Activated B cell treated with CpG ODN at 0.5 μM for 24 hours (primary cell): ENCODE measurements at regions of chr2 and their contacts with region 1.

Region 1: DNA sequence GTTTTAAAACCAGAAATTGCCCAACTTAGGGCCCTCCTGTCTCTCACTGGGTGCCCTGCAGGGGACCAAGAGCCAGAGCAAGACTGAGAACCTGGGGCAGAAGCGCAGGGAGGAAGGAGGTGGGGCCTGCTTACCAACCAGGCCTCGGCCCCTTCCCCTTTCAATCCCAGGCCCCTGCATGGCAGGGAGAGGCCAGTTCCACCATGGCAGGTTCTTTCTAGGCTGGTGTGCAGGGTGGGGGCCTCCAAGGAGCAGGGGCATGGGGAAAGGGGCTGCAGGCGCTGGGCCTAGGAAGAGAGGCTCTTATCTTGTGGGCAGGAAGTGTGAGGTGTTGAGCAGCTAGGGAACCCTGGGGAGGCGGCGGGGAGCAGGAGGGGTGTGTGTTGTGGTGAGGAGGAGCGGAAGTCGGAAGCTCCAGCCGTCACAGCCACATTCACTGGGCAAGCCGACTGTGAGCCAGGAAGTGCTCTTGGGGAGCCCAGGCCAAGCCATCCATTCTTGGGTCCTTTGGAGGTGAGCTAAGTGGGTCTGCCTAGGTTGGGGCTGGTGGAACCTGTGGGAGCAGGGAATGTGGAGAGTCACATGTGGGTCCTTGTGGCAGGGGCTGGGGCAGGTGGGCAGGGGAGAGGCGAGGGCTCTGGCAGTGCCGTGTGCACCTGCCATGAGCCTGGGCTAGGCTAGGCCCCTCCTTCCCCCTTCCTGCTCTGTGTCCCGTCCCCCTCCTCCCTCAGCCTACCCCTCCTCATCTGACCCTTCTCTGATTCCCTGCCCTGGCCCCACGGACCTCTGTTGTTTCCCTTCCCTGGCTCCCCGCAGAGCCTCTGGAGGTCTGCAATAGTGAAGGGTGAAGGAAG is at the start of gene PSD4:
- DNase-seq: peak; percentile 69
- ATAC-seq: peak; percentile 75
- H3K4me3 Mint-ChIP-seq: peak within 1 kb of the TSS; percentile 87
- H3K27ac Mint-ChIP-seq: peak within 1 kb of the TSS; percentile 91
- H3K4me1 Mint-ChIP-seq: peaks cover 85% of the 10 kb centered on the region
- H3K27me3 Mint-ChIP-seq: peaks cover 2% of the 10 kb centered on the region
- CTCF ChIP-seq: no peak
- total RNA-seq, gene PSD4: 161 and 182 TPM in 2 replicates

Region 2: DNA sequence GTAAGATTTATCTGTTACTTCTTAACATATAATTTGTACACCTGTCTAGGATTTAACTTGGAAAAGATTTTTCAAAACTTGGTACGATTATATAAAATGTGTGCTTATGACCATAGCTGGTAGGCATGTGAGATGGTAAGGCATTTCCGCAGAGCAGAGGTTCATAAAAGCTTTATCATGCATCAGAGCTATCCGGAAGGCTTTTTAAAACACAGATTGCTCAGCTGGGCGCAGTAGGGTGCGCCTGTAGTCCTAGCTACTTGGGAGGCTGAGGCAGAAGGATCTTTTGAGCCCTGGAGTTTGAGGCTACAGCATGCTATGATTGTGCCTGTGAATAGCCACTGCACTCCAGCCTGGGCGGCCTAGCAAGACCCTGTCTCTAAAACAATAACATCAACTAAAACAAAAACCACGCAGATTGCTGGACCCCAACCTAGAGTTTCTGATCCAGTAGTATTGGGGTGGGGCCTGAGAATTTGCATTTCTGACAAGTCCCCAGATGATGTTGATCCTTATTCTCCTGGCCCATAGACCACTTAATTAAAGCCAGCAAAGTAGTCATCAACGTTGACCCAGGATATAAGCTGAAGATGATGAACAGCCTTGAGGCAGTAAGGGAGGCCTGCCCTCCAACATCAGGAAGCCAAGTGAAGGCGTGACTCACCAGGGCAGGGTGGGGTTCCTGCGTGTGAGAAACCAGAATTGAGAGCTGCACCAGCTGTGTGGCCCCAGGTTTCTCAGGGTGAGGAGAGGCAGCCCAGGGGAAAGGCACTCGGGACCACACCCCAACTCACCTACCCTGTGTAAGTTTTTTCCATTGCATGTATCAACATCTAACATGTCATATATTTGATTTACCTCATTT is 549.6 kb before region 1 on chr2:
- CTCF ChIA-PET with region 1: no interaction called
- POLR2A ChIA-PET with region 1: no interaction called
- intact Hi-C with region 1: no loop called
- DNase-seq: no peak
- ATAC-seq: peak; percentile 75
- H3K4me3 Mint-ChIP-seq: no peak overlapping the region
- H3K27ac Mint-ChIP-seq: no peak overlapping the region
- H3K4me1 Mint-ChIP-seq: peaks cover 16% of the 10 kb centered on the region
- H3K27me3 Mint-ChIP-seq: no peaks in the 10 kb centered on the region
- CTCF ChIP-seq: no peak

Region 3: DNA sequence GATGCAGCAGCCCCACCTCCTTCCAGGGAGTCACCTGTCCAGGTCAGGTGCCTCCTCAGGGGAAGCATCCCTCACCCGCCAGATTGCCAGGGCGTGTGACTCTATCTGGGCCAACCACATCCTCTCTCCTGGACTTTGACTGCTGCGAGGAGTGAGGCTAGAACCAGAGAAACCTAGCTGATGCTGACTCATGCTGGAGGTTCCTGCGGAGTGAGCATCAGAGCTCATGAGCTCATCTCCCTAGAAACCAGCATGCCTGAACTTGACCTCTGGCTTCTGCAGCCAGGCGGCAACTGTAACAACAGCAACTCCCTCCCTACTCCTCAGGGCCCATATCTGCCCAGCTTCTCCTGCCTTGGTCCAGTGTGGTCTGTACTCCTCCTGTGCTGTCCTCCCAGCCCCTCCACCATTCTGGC is 481.3 kb before region 1 on chr2:
- CTCF ChIA-PET with region 1: no interaction called
- POLR2A ChIA-PET with region 1: no interaction called
- intact Hi-C with region 1: no loop called
- DNase-seq: no peak
- ATAC-seq: peak; percentile 43
- H3K4me3 Mint-ChIP-seq: no peak overlapping the region
- H3K27ac Mint-ChIP-seq: peak overlapping the region; percentile 37
- H3K4me1 Mint-ChIP-seq: peaks cover 17% of the 10 kb centered on the region
- H3K27me3 Mint-ChIP-seq: no peaks in the 10 kb centered on the region
- CTCF ChIP-seq: no peak

Region 4: DNA sequence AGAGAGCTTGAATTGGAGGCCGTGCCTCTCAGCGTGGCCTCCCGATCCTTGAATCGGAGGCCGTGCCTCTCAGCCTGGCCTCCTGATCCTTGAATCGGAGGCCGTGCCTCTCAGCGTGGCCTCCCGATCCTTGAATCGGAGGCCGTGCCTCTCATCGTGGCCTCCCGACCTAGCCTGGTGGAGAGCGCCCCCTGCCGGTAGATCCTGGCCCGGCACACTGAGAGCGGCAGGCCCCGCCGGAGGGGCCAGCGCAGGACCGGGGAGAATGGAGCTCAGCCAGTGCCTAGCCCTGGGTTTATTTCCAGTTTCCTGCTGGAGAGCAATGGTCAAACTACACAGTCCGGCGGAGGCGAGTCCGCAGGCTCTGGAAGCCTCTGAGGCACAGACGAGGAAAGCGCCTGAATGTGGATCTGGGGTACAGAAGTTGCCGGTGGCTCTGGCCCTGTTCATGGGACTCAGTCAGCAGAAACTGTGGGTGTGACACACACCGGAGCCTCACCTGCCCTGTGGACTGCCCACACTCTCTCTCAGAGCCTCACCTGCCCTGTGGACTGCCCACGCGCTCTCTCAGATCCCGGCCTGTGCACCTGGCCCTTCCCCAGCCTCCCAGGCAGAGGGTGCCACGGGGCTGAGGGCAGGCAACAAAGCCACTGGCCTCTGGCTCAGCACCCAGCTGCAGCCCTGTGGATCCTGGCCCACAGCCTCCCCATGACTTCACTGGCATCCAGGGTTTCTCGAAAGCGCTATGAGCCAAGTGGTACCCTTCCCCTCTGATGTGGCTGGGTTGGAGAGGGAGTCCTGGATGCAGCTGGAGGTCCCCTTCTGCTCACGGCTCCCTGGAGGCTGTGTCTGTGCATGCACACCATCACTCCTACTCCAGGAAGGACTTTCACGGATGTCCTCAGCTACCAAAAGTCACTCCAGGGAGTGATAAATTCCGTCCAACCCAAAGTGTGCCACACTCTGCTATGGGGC is 122.6 kb before region 1 on chr2:
- CTCF ChIA-PET with region 1: no interaction called
- POLR2A ChIA-PET with region 1: no interaction called
- intact Hi-C with region 1: no loop called
- DNase-seq: no peak
- ATAC-seq: no peak
- H3K4me3 Mint-ChIP-seq: no peak overlapping the region
- H3K27ac Mint-ChIP-seq: no peak overlapping the region
- H3K4me1 Mint-ChIP-seq: no peaks in the 10 kb centered on the region
- H3K27me3 Mint-ChIP-seq: peaks cover 24% of the 10 kb centered on the region
- CTCF ChIP-seq: no peak

Region 5: DNA sequence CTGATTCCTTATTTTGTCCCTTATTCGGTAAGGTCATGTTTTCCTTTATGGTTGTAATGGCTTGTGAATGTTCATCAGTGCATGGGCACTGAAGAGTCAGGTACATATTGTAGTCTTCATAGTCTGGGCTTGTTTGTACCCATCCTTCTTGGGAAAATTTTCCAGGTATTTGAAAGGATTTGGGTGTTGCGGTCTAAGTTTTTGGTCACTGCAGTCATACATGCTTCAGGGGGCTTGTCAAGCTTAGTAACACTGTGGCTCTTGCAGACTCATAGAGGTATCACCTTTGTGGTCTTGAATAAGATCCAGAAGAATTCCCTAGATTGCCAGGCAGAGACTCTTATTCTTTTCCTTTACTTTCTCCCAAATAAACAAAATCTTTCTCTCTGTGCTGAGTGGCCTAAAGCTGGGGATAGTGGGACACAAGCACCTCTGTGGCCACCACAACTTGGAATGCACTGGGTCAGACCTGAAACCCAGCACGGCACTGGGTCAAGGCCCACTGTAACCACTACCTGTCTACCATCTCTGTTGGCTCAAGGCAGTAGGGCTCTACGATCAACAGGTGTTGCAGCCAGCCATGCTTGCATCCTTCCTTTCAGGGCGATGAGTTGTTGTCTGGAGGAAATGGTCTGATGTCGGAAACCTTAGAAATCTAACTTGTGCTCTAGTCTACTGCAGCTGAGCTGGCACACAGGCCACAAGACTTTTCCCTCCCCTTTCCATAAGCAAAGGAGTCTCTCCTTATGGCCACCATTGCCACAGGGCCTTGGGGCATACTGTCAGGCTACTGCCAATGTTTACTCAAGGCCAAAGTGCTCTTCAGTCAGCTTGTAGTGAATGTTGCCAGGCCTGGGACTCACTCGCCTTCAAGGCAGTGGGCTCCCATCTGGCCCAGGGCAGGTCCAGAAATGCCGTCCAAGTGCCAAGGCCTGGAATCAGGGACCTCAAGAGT is 24.9 kb before region 1 on chr2:
- CTCF ChIA-PET with region 1: interaction called, 4 read pairs
- POLR2A ChIA-PET with region 1: interaction called, 22 read pairs
- intact Hi-C with region 1: no loop called
- DNase-seq: no peak
- ATAC-seq: peak; percentile 75
- H3K4me3 Mint-ChIP-seq: peak overlapping the region; percentile 41
- H3K27ac Mint-ChIP-seq: peak overlapping the region; percentile 80
- H3K4me1 Mint-ChIP-seq: peaks cover 23% of the 10 kb centered on the region
- H3K27me3 Mint-ChIP-seq: no peaks in the 10 kb centered on the region
- CTCF ChIP-seq: no peak

Region 6: GRCh38 chr2:113157118-113157896 is 16.5 kb before region 1 on chr2:
- CTCF ChIA-PET with region 1: interaction called, 5 read pairs
- POLR2A ChIA-PET with region 1: interaction called, 88 read pairs
- intact Hi-C with region 1: loop called (anchors 1 kb)
- DNase-seq: peak; percentile 57
- ATAC-seq: peak; percentile 90
- H3K4me3 Mint-ChIP-seq: peak overlapping the region; percentile 84
- H3K27ac Mint-ChIP-seq: peak overlapping the region; percentile 70
- H3K4me1 Mint-ChIP-seq: peaks cover 17% of the 10 kb centered on the region
- H3K27me3 Mint-ChIP-seq: no peaks in the 10 kb centered on the region
- CTCF ChIP-seq: no peak

Region 7: DNA sequence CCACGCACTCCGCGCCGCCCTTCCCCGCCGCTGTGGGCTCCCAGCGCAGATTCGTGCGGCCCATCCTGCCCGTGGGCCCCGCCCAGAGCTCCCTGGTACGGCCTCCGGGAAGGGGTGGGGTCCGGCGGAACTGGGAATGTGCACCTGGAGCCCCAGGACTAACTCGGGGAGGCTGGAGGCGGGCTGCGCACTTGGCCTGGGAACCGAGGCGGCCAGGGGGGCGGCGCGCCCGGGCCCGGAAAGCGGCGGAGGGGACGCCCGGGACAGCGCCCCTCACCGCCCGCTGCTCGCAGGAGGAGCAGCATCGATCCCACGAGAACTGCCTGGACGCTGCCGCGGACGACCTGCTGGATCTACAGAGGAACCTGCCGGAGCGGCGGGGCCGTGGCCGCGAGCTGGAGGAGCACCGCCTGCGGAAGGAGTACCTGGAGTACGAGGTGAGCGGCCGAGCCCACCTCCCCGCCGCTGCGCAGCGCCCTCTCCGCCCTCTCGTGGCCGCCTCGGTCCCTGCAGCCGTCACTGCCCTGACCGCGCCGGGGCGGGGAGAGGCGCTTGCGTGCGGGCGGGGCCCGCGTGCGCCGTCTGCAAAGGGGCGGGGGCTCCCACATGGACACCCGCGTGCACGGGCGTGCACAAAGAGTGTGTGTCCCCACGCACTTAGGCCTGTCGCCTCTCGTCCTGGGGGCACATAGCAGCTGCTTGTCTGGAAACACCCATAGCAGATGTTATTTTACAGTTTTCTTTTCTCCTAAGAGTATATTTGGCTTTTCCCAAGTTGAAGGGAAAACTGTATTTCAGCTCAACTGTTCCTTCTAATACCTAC is 25.2 kb after region 1 on chr2:
- CTCF ChIA-PET with region 1: interaction called, 39 read pairs
- POLR2A ChIA-PET with region 1: interaction called, 42 read pairs
- intact Hi-C with region 1: loop called (anchors 1 kb)
- DNase-seq: peak; percentile 87
- ATAC-seq: peak; percentile 91
- H3K4me3 Mint-ChIP-seq: peak overlapping the region; percentile 76
- H3K27ac Mint-ChIP-seq: no peak overlapping the region
- H3K4me1 Mint-ChIP-seq: peaks cover 7% of the 10 kb centered on the region
- H3K27me3 Mint-ChIP-seq: no peaks in the 10 kb centered on the region
- CTCF ChIP-seq: peak; percentile 44

Region 8: GRCh38 chr2:113692698-113693428 is 519.1 kb after region 1 on chr2:
- CTCF ChIA-PET with region 1: no interaction called
- POLR2A ChIA-PET with region 1: no interaction called
- intact Hi-C with region 1: loop called (anchors 10 kb)
- DNase-seq: no peak
- ATAC-seq: peak; percentile 77
- H3K4me3 Mint-ChIP-seq: peak overlapping the region; percentile 58
- H3K27ac Mint-ChIP-seq: peak overlapping the region; percentile 63
- H3K4me1 Mint-ChIP-seq: peaks cover 57% of the 10 kb centered on the region
- H3K27me3 Mint-ChIP-seq: no peaks in the 10 kb centered on the region
- CTCF ChIP-seq: no peak

Region 9: GRCh38 chr2:114754907-114755563 is 1581.3 kb after region 1 on chr2:
- CTCF ChIA-PET with region 1: no interaction called
- POLR2A ChIA-PET with region 1: no interaction called
- intact Hi-C with region 1: no loop called
- DNase-seq: no peak
- ATAC-seq: no peak
- H3K4me3 Mint-ChIP-seq: no peak overlapping the region
- H3K27ac Mint-ChIP-seq: no peak overlapping the region
- H3K4me1 Mint-ChIP-seq: no peaks in the 10 kb centered on the region
- H3K27me3 Mint-ChIP-seq: no peaks in the 10 kb centered on the region
- CTCF ChIP-seq: no peak